ENCODE measurements at regions of chr3 and their contacts with region 1.

Region 1: GRCh38 chr3:154243353-154243752 is 80.9 kb downstream of the DHX36 start:
- ATAC-seq: peak in 2 of 8 experiments; percentile 44 to 50
- H3K4me3 ChIP-seq: no peak overlapping the region
- H3K27ac ChIP-seq: no peak overlapping the region
- H3K4me1 ChIP-seq: peaks cover 6 to 13% of the 10 kb centered on the region in 2 donors

Region 2: GRCh38 chr3:153927107-153927506 is 316.2 kb before region 1 on chr3:
- in situ Hi-C with region 1: no loop called
- ATAC-seq: peak in 4 of 8 experiments; percentile 26 to 97 (median 74)
- H3K4me3 ChIP-seq: no peak overlapping the region
- H3K27ac ChIP-seq: no peak overlapping the region
- H3K4me1 ChIP-seq: no peaks in the 10 kb centered on the region

Region 3: GRCh38 chr3:154018100-154018696 is 225.2 kb before region 1 on chr3:
- in situ Hi-C with region 1: loop called in 1 of 9 experiments (anchors 25 kb)
- ATAC-seq: peak in 2 of 8 experiments; percentile 47 to 67
- H3K4me3 ChIP-seq: no peak overlapping the region
- H3K27ac ChIP-seq: no peak overlapping the region
- H3K4me1 ChIP-seq: peaks cover 0 to 2% of the 10 kb centered on the region in 2 donors

Region 4: DNA sequence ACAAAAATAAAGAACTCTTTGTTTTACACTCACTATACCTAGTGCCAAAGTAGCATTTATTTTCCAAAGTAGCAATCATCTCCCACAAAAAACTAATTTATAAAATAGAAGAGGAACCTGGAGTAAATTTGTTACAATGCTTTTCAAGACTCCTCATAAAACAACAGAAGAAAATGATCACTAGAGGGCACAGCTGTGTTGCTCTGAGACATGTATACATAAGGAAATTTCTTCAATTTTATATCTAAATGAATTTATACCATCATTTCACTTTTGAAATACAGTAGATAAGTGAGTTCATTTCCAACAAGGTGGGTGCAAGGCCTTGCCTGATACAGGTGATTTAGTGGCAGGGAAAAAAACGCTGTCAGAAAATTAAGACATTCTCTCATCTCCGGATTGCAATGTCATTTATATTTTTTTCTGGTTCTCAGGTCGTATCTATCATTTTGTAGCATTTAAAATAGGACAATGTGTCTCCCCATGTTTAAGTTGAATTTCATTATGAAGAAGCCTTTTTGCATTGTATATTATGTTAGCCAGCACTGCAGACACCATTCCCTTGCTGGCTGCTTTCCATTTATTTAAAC is 147.4 kb before region 1 on chr3:
- in situ Hi-C with region 1: loop called in 2 of 9 experiments (anchors 10 to 25 kb)
- ATAC-seq: peak in 2 of 8 experiments; percentile 34 to 47
- H3K4me3 ChIP-seq: no peak overlapping the region
- H3K27ac ChIP-seq: no peak overlapping the region
- H3K4me1 ChIP-seq: no peaks in the 10 kb centered on the region